HEK293 (cell line): ENCODE measurements at regions of chr10 and their contacts with region 1.

Region 1: GRCh38 chr10:100518761-100519241 is 860 bp downstream of the SEC31B start:
- H3K4me3 ChIP-seq: no peak overlapping the region
- H3K27ac ChIP-seq: no peak overlapping the region
- H3K4me1 ChIP-seq: no peaks in the 10 kb centered on the region
- CTCF ChIP-seq: peak; percentile 39; the same call in 1 of the 2 replicates

Region 2: GRCh38 chr10:100338434-100339036 is 180.3 kb before region 1 on chr10:
- CTCF ChIA-PET with region 1: interaction called, 12 read pairs
- POLR2A ChIA-PET with region 1: no interaction called
- H3K4me3 ChIP-seq: no peak overlapping the region
- H3K27ac ChIP-seq: no peak overlapping the region
- H3K4me1 ChIP-seq: no peaks in the 10 kb centered on the region
- CTCF ChIP-seq: peak; percentile 74

Region 3: GRCh38 chr10:100442530-100442929 is 76.3 kb before region 1 on chr10:
- CTCF ChIA-PET with region 1: interaction called, 30 read pairs
- POLR2A ChIA-PET with region 1: interaction called, 3 read pairs
- H3K4me3 ChIP-seq: no peak overlapping the region
- H3K27ac ChIP-seq: no peak overlapping the region
- H3K4me1 ChIP-seq: no peaks in the 10 kb centered on the region
- CTCF ChIP-seq: no peak

Region 4: GRCh38 chr10:100501423-100501822 is 17.4 kb before region 1 on chr10:
- CTCF ChIA-PET with region 1: interaction called, 53 read pairs
- POLR2A ChIA-PET with region 1: no interaction called
- H3K4me3 ChIP-seq: no peak overlapping the region
- H3K27ac ChIP-seq: no peak overlapping the region
- H3K4me1 ChIP-seq: no peaks in the 10 kb centered on the region
- CTCF ChIP-seq: no peak

Region 5: GRCh38 chr10:100529475-100530298 is 10.9 kb after region 1 on chr10 and contains the start of gene NDUFB8:
- CTCF ChIA-PET with region 1: interaction called, 45 read pairs
- POLR2A ChIA-PET with region 1: interaction called, 4 read pairs
- H3K4me3 ChIP-seq: peak within 1 kb of the TSS; percentile 71
- H3K27ac ChIP-seq: peak within 1 kb of the TSS; percentile 67; the same call in 1 of the 2 replicates
- H3K4me1 ChIP-seq: no peaks in the 10 kb centered on the region
- CTCF ChIP-seq: no peak

Region 6: DNA sequence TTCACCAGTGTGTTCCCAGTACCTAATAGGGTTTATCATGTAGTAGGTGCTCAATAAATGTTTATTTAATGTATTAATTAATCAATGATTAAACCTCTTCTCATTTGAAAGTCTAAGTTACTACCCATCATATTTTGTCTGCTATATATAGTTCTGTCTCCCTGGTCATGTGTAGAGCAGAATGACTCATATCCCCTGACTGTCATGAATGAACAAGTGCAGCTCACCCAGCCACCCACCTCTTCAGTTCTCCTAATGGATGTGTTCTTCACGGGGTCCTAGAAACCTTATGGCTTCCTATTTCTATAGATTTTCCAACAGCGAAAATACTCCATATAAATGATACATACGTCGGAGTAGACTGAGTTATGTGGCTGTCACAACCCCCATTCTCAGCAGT is 81.4 kb after region 1 on chr10:
- CTCF ChIA-PET with region 1: no interaction called
- POLR2A ChIA-PET with region 1: no interaction called
- H3K4me3 ChIP-seq: no peak overlapping the region
- H3K27ac ChIP-seq: no peak overlapping the region
- H3K4me1 ChIP-seq: no peaks in the 10 kb centered on the region
- CTCF ChIP-seq: no peak

Region 7: GRCh38 chr10:100878291-100878910 is 359.6 kb after region 1 on chr10:
- CTCF ChIA-PET with region 1: interaction called, 18 read pairs
- POLR2A ChIA-PET with region 1: no interaction called
- H3K4me3 ChIP-seq: no peak overlapping the region
- H3K27ac ChIP-seq: no peak overlapping the region
- H3K4me1 ChIP-seq: no peaks in the 10 kb centered on the region
- CTCF ChIP-seq: peak; percentile 88